HepG2 (cell line): ENCODE measurements at regions of chr15 and their contacts with region 1.

Region 1: GRCh38 chr15:34241372-34242330 is 16.8 kb downstream of the EMC4 start:
- DNase-seq: peak; percentile 34
- ATAC-seq: peak; percentile 81
- H3K4me3 ChIP-seq: no peak overlapping the region
- H3K27ac ChIP-seq: no peak overlapping the region
- H3K4me1 ChIP-seq: no peaks in the 10 kb centered on the region
- H3K27me3 ChIP-seq: no peaks in the 10 kb centered on the region
- CTCF ChIP-seq: peak; percentile 39
- EP300 ChIP-seq: no peak
- POLR2A ChIP-seq: no peak
- RAD21 ChIP-seq: no peak

Region 2: GRCh38 chr15:34284937-34285336 is 43.3 kb after region 1 on chr15:
- CTCF ChIA-PET with region 1: no interaction called
- POLR2A ChIA-PET with region 1: no interaction called
- in situ Hi-C with region 1: no loop called
- intact Hi-C with region 1: no loop called
- DNase-seq: no peak
- ATAC-seq: no peak
- H3K4me3 ChIP-seq: no peak overlapping the region
- H3K27ac ChIP-seq: no peak overlapping the region
- H3K4me1 ChIP-seq: peaks cover 9% of the 10 kb centered on the region; the same call in 1 of the 2 replicates
- H3K27me3 ChIP-seq: no peaks in the 10 kb centered on the region
- CTCF ChIP-seq: no peak
- EP300 ChIP-seq: no peak
- POLR2A ChIP-seq: no peak
- RAD21 ChIP-seq: no peak

Region 3: DNA sequence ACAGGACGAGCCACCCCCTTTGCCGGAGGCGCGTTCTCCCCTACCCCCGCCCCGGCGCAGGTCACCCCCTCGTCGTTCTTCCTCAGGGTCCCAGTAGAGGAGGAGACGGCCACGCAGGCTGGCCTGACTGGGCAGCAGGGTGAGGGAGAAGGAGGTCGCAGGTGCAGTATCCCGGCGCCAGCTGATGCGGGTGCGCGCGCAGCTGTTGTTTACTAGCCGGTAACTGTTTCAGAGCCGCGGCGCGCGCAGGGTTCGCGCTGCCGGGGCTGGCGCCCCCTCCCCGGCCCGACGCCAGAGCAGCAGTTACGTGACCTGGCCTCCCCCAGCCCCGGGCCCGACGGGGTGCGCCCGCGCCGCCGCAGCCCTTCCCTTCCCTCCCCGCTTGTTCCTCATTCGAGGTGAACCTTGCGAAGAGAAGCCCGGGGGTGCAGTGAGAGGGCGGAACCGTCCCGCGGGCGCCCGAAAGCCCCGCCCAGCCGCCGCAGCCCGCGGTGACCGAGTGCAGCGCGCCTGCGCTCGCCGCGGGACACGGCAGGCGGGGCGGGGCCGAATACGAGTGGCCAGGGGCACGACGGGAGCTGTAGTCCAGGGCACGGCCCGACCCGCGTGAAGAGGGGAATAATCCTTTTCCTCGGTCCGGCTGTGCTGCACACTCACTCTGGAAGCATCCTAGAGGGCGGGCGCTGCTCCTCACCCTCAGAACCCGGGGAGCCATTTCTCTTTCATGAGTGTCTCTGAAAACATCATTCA is 96.1 kb after region 1 on chr15 and contains the start of gene SLC12A6:
- CTCF ChIA-PET with region 1: no interaction called
- POLR2A ChIA-PET with region 1: no interaction called
- in situ Hi-C with region 1: no loop called
- intact Hi-C with region 1: loop called (anchors 2 kb)
- DNase-seq: peak; percentile 78
- ATAC-seq: peak; percentile 95
- H3K4me3 ChIP-seq: peak within 1 kb of the TSS; percentile 83 to 97 (median 83)
- H3K27ac ChIP-seq: peak within 1 kb of the TSS; percentile 78
- H3K4me1 ChIP-seq: peaks cover 48% of the 10 kb centered on the region
- H3K27me3 ChIP-seq: no peaks in the 10 kb centered on the region; a peak in 1 of 5 replicates
- CTCF ChIP-seq: peak; percentile 27; the same call in 1 of the 2 replicates
- EP300 ChIP-seq: no peak
- POLR2A ChIP-seq: peak; percentile 58 to 64; a peak in 3 of 4 replicates
- RAD21 ChIP-seq: peak; percentile 48
- total RNA-seq, gene SLC12A6: 10.1 and 15.2 TPM in 2 replicates

Region 4: GRCh38 chr15:34367101-34368081 is 125.7 kb after region 1 on chr15 and contains the start of gene LPCAT4:
- CTCF ChIA-PET with region 1: interaction called, 6 read pairs
- POLR2A ChIA-PET with region 1: no interaction called
- in situ Hi-C with region 1: loop called (anchors 10 kb)
- intact Hi-C with region 1: loop called (anchors 5 kb)
- DNase-seq: peak; percentile 66
- ATAC-seq: peak; percentile 90
- H3K4me3 ChIP-seq: peak within 1 kb of the TSS; percentile 59 to 94 (median 87)
- H3K27ac ChIP-seq: peak within 1 kb of the TSS; percentile 94
- H3K4me1 ChIP-seq: peaks cover 21% of the 10 kb centered on the region
- H3K27me3 ChIP-seq: no peaks in the 10 kb centered on the region
- CTCF ChIP-seq: peak; percentile 98
- EP300 ChIP-seq: 0 out of 4 replicates have a peak, but pooled peaks of 1 of the 2 experiments have one; percentile 18
- POLR2A ChIP-seq: peak; percentile 74 to 87
- RAD21 ChIP-seq: peak; percentile 84
- total RNA-seq, gene LPCAT4: 2.2 and 8.1 TPM in 2 replicates

Region 5: DNA sequence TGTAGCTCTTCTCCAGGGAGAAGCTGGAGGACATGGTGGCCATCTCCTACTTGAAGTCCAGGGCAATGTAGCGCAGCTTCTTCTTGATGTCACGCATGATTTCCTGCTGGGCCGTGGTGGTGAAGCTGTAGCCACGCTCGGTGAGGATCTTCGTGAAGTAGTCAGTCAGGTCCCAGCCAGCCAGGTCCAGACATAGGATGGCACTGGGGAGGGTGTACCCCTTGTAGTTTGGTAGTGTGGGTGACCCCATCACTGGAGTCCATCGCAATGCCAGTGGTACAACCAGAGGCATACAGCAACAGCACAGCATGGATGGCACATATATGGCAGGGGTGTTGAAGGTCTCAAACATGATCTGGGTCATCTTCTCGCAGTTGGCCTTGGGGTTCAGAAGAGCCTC is 132.3 kb after region 1 on chr15:
- CTCF ChIA-PET with region 1: no interaction called
- POLR2A ChIA-PET with region 1: no interaction called
- in situ Hi-C with region 1: loop called (anchors 10 kb)
- intact Hi-C with region 1: loop called (anchors 5 kb)
- DNase-seq: no peak
- ATAC-seq: no peak
- H3K4me3 ChIP-seq: no peak overlapping the region
- H3K27ac ChIP-seq: no peak overlapping the region
- H3K4me1 ChIP-seq: no peaks in the 10 kb centered on the region
- H3K27me3 ChIP-seq: no peaks in the 10 kb centered on the region; a peak in 1 of 5 replicates
- CTCF ChIP-seq: no peak
- EP300 ChIP-seq: no peak
- POLR2A ChIP-seq: no peak
- RAD21 ChIP-seq: no peak

Region 6: GRCh38 chr15:34587717-34588674 is 346.3 kb after region 1 on chr15:
- CTCF ChIA-PET with region 1: no interaction called
- POLR2A ChIA-PET with region 1: no interaction called
- in situ Hi-C with region 1: loop called (anchors 25 kb)
- intact Hi-C with region 1: loop called (anchors 1 kb)
- DNase-seq: peak; percentile 80
- ATAC-seq: peak; percentile 42
- H3K4me3 ChIP-seq: peak overlapping the region; percentile 19 to 44 (median 40); a peak in 1 of 6 replicates
- H3K27ac ChIP-seq: no peak overlapping the region
- H3K4me1 ChIP-seq: peaks cover 12% of the 10 kb centered on the region; the same call in 1 of the 2 replicates
- H3K27me3 ChIP-seq: no peaks in the 10 kb centered on the region
- CTCF ChIP-seq: peak; percentile 85
- EP300 ChIP-seq: no peak
- POLR2A ChIP-seq: peak; percentile 78 to 95
- RAD21 ChIP-seq: peak; percentile 67